CD4-positive, alpha-beta memory T cell (primary cell): ENCODE measurements at regions of chr20 and their contacts with region 1.

Region 1: DNA sequence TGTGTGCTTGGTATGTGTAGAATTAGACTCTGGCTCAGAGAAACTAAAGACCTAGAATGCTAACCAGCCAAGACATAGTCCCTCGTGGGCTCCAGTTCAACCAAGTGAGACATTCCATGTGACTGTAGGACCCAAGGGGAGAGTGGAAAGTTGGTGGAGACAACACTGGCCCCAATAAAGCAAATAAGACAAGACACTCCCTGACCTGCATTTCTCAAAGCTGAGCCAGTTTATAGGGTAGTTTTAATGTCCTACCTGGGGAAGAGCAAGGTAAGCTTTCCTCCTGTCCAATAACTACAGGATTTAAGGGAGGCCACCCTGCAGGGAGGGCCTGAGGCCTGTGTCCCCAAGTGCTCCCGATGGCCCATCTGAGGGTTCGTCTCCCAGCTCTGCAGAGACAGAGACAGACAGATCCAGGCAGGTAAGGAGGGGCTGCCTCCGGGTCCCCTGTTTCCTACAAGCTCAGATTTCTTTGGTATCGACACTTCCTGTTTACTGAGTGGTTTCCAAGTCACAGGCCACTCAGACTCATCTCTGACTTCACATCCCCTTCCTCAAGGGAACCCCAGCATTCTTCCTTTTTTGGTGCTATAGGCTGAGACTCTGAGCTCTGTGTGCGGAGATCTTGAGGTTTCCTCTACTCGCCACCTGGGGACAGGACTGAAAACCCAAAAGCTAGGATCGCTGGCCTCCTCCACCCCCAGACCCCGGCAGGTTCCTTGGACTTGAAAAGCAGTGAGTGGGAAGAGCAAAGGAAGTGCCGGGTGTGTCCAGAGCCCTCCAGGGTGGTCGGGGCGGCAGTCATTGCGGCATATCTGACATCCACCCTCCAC is 92.4 kb downstream of the PRND start:
- DNase-seq: peak; percentile 86 to 92 (median 88)
- H3K4me3 ChIP-seq: peak overlapping the region; percentile 40 to 89
- H3K4me3 Mint-ChIP-seq: peak overlapping the region; percentile 90 to 97 (median 94)
- H3K27ac ChIP-seq: peak overlapping the region; percentile 98
- H3K27ac Mint-ChIP-seq: peak overlapping the region; percentile 99 to 100 (median 100)
- H3K4me1 ChIP-seq: peaks cover 89% of the 10 kb centered on the region
- H3K4me1 Mint-ChIP-seq: peaks cover 66 to 87% (median 79%) of the 10 kb centered on the region in 4 donors
- H3K27me3 ChIP-seq: no peaks in the 10 kb centered on the region
- H3K27me3 Mint-ChIP-seq: no peaks in the 10 kb centered on the region

Region 2: GRCh38 chr20:4780245-4780644 is 33.8 kb before region 1 on chr20:
- CTCF ChIA-PET with region 1: interaction called, 4 read pairs
- POLR2A ChIA-PET with region 1: interaction called, 10 read pairs
- intact Hi-C with region 1: no loop called
- DNase-seq: peak in 3 of 5 donors; percentile 16 to 25 (median 23)
- H3K4me3 ChIP-seq: no peak overlapping the region
- H3K4me3 Mint-ChIP-seq: no peak overlapping the region
- H3K27ac ChIP-seq: no peak overlapping the region
- H3K27ac Mint-ChIP-seq: peak overlapping the region in 6 of 7 donors; percentile 9 to 85 (median 56)
- H3K4me1 ChIP-seq: no peaks in the 10 kb centered on the region
- H3K4me1 Mint-ChIP-seq: peaks cover 5 to 11% (median 8%) of the 10 kb centered on the region in 4 donors
- H3K27me3 ChIP-seq: no peaks in the 10 kb centered on the region
- H3K27me3 Mint-ChIP-seq: no peaks in the 10 kb centered on the region

Region 3: GRCh38 chr20:4795394-4795793 is 18.7 kb before region 1 on chr20:
- CTCF ChIA-PET with region 1: interaction called, 10 read pairs
- POLR2A ChIA-PET with region 1: interaction called, 30 read pairs
- intact Hi-C with region 1: no loop called
- DNase-seq: no peak
- H3K4me3 ChIP-seq: no peak overlapping the region
- H3K4me3 Mint-ChIP-seq: no peak overlapping the region
- H3K27ac ChIP-seq: no peak overlapping the region
- H3K27ac Mint-ChIP-seq: peak overlapping the region; percentile 35 to 90 (median 82)
- H3K4me1 ChIP-seq: peaks cover 8% of the 10 kb centered on the region
- H3K4me1 Mint-ChIP-seq: peaks cover 5 to 28% (median 13%) of the 10 kb centered on the region in 4 donors
- H3K27me3 ChIP-seq: no peaks in the 10 kb centered on the region
- H3K27me3 Mint-ChIP-seq: no peaks in the 10 kb centered on the region

Region 4: DNA sequence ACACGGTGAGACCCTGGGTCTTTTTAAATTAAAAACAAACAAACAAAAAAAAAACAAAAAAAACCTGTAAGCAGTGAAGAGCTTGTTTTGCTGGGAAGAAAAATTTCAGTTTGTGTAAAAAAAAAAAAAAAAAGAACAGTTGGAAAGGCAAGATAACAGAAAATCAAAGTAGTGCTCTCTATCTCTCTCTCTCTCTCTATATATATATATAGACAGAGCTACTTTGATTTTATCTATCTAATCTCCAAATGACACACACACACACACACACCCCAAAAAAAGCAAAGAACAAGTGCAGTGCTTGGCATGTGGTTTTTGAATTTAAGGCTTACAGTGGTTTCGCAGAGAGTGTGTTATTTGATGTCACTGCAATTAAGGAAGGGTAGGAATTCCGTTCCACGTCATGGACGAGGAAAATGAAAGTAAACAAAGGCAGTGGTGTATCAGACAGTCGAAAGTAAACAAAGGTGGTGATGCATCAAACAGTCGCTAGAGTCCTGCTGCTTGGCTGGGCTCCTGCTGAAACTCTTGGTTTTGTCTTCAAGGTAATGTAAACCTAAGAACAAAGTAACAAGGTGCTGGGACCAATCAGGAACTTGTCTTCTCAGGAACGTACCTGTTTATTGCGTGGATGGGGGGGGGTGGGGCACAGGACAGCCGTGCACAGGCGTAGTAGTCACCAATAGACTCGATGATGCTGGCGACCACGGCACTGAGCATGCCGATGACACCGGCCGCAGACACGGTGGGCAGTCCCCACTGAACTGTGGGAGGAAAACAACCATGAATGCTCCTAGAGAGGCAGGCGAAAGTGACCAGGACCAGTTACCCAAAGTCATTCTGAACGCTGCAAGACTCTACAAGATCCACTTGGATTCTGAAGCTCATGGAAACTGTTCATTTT is 55.5 kb after region 1 on chr20:
- CTCF ChIA-PET with region 1: interaction called, 4 read pairs
- POLR2A ChIA-PET with region 1: interaction called, 3 read pairs
- intact Hi-C with region 1: loop called (anchors 5 kb)
- DNase-seq: peak; percentile 59 to 73 (median 69)
- H3K4me3 ChIP-seq: no peak overlapping the region
- H3K4me3 Mint-ChIP-seq: peak overlapping the region; percentile 37 to 83 (median 60)
- H3K27ac ChIP-seq: peak overlapping the region; percentile 37
- H3K27ac Mint-ChIP-seq: peak overlapping the region; percentile 77 to 91 (median 82)
- H3K4me1 ChIP-seq: peaks cover 14% of the 10 kb centered on the region
- H3K4me1 Mint-ChIP-seq: peaks cover 12 to 24% (median 16%) of the 10 kb centered on the region in 4 donors
- H3K27me3 ChIP-seq: no peaks in the 10 kb centered on the region
- H3K27me3 Mint-ChIP-seq: no peaks in the 10 kb centered on the region

Region 5: GRCh38 chr20:5119435-5120188 is 305.5 kb after region 1 on chr20 and contains the start of gene PCNA:
- CTCF ChIA-PET with region 1: no interaction called
- POLR2A ChIA-PET with region 1: interaction called, 15 read pairs
- intact Hi-C with region 1: no loop called
- DNase-seq: peak; percentile 92 to 96 (median 94)
- H3K4me3 ChIP-seq: peak within 1 kb of the TSS; percentile 83 to 89
- H3K4me3 Mint-ChIP-seq: peak within 1 kb of the TSS; percentile 92 to 97 (median 95)
- H3K27ac ChIP-seq: peak within 1 kb of the TSS; percentile 72
- H3K27ac Mint-ChIP-seq: peak within 1 kb of the TSS; percentile 93 to 98 (median 96)
- H3K4me1 ChIP-seq: peaks cover 29% of the 10 kb centered on the region
- H3K4me1 Mint-ChIP-seq: peaks cover 13 to 42% (median 29%) of the 10 kb centered on the region in 4 donors
- H3K27me3 ChIP-seq: no peaks in the 10 kb centered on the region
- H3K27me3 Mint-ChIP-seq: no peaks in the 10 kb centered on the region
- total RNA-seq, gene PCNA: 60.0 to 60.5 TPM